ENCODE measurements at regions of chr16 and their contacts with region 1.

Region 1: GRCh38 chr16:67892899-67893742 is at the start of gene PSKH1:
- DNase-seq: peak; percentile 98
- H3K4me3 ChIP-seq: peak within 1 kb of the TSS; percentile 100
- H3K27ac ChIP-seq: peak within 1 kb of the TSS; percentile 98
- H3K4me1 ChIP-seq: peaks cover 6% of the 10 kb centered on the region
- H3K27me3 ChIP-seq: no peaks in the 10 kb centered on the region
- CTCF ChIP-seq: no peak
- total RNA-seq, gene PSKH1: 24.2 and 27.4 TPM in 2 replicates

Region 2: GRCh38 chr16:68033966-68034365 is 140.8 kb after region 1 on chr16:
- CTCF ChIA-PET with region 1: no interaction called
- POLR2A ChIA-PET with region 1: interaction called, 15 read pairs
- intact Hi-C with region 1: no loop called
- DNase-seq: no peak
- H3K4me3 ChIP-seq: no peak overlapping the region
- H3K27ac ChIP-seq: no peak overlapping the region
- H3K4me1 ChIP-seq: no peaks in the 10 kb centered on the region
- H3K27me3 ChIP-seq: no peaks in the 10 kb centered on the region
- CTCF ChIP-seq: no peak

Region 3: DNA sequence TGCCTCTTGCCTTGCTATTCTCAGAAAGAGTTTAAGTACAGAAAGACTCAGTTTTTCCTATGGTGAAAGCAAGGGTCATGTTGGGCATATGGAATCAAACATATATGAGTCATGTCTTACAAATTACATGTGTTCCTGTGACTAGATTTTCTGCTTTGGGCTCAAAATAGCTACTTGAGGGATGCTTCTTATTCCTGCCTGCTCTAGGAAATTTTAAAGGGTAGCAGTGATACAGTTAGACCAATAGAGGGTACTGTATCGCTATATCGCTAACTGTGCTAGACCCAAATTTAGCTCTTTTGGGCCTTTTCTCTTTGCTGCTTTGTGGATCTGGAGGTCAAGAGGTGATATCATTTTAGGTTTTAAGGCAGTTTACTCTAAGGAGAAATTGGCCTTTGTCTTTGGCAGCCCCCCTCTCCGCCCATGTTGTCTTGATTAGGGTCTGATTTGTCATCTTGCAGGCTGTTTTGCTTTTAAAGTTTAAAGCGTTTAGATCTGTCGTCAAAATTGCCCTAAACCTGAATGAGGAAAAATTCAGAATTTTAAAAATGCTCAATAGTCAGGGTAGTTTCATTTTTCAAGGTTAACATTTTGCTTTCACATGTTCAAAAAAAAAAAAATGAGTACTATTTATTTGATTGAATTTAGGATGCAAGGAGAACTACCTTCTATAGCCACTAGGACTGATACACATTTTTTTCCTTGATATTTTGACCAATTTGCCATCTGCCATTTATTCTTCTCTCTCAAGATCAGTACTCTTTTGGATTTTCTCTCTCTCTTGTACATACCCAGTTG is 200.9 kb after region 1 on chr16:
- CTCF ChIA-PET with region 1: no interaction called
- POLR2A ChIA-PET with region 1: no interaction called
- intact Hi-C with region 1: no loop called
- DNase-seq: peak; percentile 42
- H3K4me3 ChIP-seq: no peak overlapping the region
- H3K27ac ChIP-seq: no peak overlapping the region
- H3K4me1 ChIP-seq: peaks cover 26% of the 10 kb centered on the region
- H3K27me3 ChIP-seq: no peaks in the 10 kb centered on the region
- CTCF ChIP-seq: peak; percentile 62